ENCODE measurements at regions of chr6 and their contacts with region 1.

Region 1: DNA sequence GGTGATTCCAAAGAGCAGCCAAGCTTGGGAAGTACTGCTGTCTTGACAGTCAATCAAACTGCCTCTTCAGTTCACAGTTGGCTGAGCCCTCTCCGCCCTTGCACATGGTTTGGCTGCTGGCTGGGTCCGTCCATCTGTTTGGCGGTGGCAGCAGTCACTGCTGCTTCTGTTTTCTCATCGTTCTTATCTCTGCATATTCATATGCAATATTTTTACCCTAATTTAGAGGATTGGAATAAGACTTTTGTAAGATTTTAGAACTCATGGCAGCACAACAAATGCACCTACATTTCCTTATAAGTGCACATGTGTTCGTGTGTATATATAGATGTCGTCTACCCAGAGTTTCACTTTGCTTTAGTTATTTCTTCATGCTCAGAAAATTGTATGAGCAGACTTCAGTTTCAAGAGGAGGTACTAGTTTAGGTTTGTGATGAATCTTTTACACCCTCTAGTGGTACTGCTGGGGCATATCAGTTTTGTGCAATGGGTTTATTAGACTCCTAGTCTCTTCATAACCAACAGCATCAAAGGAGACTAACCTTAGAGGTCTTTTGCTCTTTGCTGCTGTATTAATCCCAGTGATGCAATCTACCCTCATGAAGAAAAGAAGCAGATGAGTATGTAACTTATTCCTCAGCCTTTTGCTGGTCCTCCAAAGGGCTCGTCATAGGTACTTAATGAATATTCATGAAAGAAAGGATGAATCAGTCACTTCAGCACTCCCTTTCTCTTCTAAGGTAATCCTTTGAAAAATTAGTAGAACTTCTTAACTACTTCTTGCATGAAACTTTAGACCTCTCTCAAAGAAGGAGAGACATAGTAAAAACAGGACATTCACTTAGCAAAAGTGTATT is 44.3 kb downstream of the KHDC1L start:
- DNase-seq: peak; percentile 12
- H3K4me3 Mint-ChIP-seq: no peak overlapping the region
- H3K27ac Mint-ChIP-seq: no peak overlapping the region
- H3K4me1 Mint-ChIP-seq: peaks cover 4% of the 10 kb centered on the region
- H3K27me3 Mint-ChIP-seq: no peaks in the 10 kb centered on the region

Region 2: DNA sequence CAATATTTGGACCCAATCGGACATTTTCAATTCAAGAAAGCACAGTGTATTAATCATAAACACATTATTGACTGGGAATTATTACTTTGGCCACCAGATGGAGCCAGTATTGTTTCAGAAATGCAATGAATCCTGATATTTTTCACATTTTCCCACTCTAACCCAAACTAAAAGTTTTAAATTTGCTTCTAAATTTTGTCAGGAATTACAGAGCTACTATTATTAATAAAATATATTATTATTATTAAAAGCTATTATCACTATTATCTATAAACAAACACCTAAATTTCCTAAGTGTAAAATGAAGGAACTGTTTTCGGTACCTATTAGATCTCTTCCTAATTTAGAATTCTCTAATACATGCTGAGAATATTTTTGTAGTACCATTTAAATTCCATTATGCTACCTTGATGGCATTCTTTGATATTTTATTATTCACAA is 1647.0 kb before region 1 on chr6:
- CTCF ChIA-PET with region 1: interaction called, 3 read pairs
- intact Hi-C with region 1: loop called (anchors 5 kb)
- DNase-seq: no peak
- H3K4me3 Mint-ChIP-seq: no peak overlapping the region
- H3K27ac Mint-ChIP-seq: no peak overlapping the region
- H3K4me1 Mint-ChIP-seq: no peaks in the 10 kb centered on the region
- H3K27me3 Mint-ChIP-seq: peaks cover 8% of the 10 kb centered on the region

Region 3: GRCh38 chr6:72522719-72523141 is 658.3 kb before region 1 on chr6:
- CTCF ChIA-PET with region 1: interaction called, 4 read pairs
- intact Hi-C with region 1: loop called (anchors 5 kb)
- DNase-seq: peak; percentile 42
- H3K4me3 Mint-ChIP-seq: no peak overlapping the region
- H3K27ac Mint-ChIP-seq: no peak overlapping the region
- H3K4me1 Mint-ChIP-seq: peaks cover 3% of the 10 kb centered on the region
- H3K27me3 Mint-ChIP-seq: no peaks in the 10 kb centered on the region

Region 4: GRCh38 chr6:73194744-73195143 is 13.8 kb after region 1 on chr6:
- CTCF ChIA-PET with region 1: no interaction called
- intact Hi-C with region 1: no loop called
- DNase-seq: no peak
- H3K4me3 Mint-ChIP-seq: no peak overlapping the region
- H3K27ac Mint-ChIP-seq: no peak overlapping the region
- H3K4me1 Mint-ChIP-seq: no peaks in the 10 kb centered on the region
- H3K27me3 Mint-ChIP-seq: no peaks in the 10 kb centered on the region